ENCODE measurements at regions of chr11 and their contacts with region 1.

Region 1: GRCh38 chr11:47797633-47798032 is 30.5 kb upstream of the FNBP4 start:
- DNase-seq: no peak
- H3K4me3 ChIP-seq: no peak overlapping the region
- H3K27ac ChIP-seq: no peak overlapping the region
- H3K4me1 ChIP-seq: no peaks in the 10 kb centered on the region
- H3K27me3 ChIP-seq: no peaks in the 10 kb centered on the region
- CTCF ChIP-seq: no peak

Region 2: DNA sequence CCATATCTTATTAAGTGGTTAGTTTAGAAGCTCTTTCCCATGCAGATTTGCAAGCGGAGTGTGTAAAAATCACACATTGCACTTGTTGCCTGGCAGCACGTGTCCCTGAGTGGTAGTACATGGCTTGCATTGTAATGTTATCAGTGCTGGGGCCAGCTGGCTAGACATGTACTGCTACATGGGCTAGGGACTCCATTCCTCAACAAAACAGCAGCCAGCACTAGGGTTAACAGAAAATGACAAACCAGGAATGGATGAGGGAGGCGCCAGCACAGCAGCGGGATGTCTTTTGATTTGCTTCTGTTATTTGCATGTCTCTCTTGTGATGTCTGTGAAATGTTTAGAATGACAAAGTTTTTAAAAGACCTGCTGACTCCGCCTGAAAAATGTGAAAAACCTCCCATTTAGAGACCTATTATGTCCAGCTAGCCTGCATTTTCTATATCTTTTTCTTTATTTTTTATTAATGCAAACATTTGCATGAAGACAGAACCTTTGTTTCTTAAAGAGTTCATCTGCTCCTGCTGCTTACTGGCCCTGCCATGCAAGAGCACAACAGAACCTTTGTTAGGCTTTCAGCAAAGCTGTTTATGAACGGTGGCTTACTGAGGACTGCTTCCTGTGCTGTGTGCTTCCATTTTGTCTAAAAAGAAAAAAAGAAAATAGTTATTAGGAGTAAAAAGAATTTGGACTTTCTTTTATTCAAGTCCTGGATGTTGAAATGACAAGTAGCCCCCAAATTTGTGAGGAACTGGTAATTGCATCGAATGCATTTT is 820.4 kb before region 1 on chr11:
- CTCF ChIA-PET with region 1: no interaction called
- POLR2A ChIA-PET with region 1: no interaction called
- intact Hi-C with region 1: no loop called
- DNase-seq: no peak
- H3K4me3 ChIP-seq: no peak overlapping the region
- H3K27ac ChIP-seq: no peak overlapping the region
- H3K4me1 ChIP-seq: peaks cover 14% of the 10 kb centered on the region; the same call in 1 of the 2 replicates
- H3K27me3 ChIP-seq: no peaks in the 10 kb centered on the region
- CTCF ChIP-seq: no peak

Region 3: DNA sequence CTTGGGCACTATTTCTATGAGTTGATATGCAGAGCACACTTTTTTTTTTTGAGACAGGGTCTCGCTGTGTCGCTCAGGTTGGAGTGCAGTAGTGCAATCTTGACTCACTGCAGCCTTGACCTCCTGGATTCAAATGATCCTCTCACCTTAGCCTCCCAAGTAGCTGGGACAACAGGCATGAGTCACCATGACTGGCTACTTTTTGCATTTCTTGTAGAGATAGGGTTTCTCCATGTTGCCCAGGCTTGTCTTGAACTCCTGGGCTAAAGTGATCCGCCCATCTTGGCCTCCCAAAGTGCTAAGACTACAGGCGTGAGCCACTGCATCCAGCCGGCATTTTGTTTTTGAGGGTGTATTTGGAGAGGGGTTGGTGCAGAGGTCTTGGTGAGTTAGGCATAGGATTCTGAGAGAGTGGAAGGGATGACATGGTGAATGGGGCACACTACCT is 125.3 kb before region 1 on chr11:
- CTCF ChIA-PET with region 1: no interaction called
- POLR2A ChIA-PET with region 1: interaction called, 20 read pairs
- intact Hi-C with region 1: no loop called
- DNase-seq: peak in 1 of 2 experiments; percentile 49
- H3K4me3 ChIP-seq: no peak overlapping the region
- H3K27ac ChIP-seq: peak overlapping the region; percentile 0; the same call in 1 of the 2 replicates
- H3K4me1 ChIP-seq: peaks cover 21% of the 10 kb centered on the region
- H3K27me3 ChIP-seq: no peaks in the 10 kb centered on the region
- CTCF ChIP-seq: no peak

Region 4: GRCh38 chr11:47819743-47820142 is 22.1 kb after region 1 on chr11:
- CTCF ChIA-PET with region 1: interaction called, 3 read pairs
- POLR2A ChIA-PET with region 1: no interaction called
- intact Hi-C with region 1: loop called (anchors 2 kb)
- DNase-seq: no peak
- H3K4me3 ChIP-seq: no peak overlapping the region
- H3K27ac ChIP-seq: no peak overlapping the region
- H3K4me1 ChIP-seq: no peaks in the 10 kb centered on the region
- H3K27me3 ChIP-seq: no peaks in the 10 kb centered on the region
- CTCF ChIP-seq: no peak

Region 5: DNA sequence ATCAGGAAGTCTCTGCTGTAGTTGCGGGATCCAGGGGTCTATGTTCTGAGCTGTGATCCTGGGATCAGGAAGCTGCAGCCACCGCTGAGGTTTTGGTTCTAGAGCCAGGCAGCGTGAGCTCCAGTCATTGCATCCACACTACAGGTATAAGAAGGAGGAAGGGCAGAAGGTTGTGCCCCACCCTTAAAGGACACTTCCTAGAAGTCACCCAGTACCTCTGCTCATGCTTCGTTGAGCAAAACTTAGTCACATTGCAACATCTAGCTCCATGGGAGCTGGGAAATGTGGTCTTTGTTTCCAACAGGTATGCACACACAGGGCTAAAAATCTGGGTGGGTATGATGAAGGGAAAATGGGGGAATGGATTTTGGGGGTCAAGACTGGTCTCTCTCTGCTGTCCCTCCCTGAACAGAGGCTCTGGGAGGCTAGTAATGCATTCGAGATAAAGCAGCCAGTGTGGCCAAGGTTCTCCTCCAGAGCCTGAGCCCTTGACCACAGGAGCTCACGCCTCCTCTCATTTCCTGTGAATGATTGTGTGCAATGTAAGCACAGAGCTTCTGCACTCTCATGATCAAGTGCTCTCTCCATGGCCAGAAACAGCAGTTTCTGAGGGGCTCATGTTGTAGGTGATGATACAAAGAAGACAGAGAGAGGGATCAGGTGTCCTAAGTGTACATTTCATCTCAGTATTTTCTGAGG is 332.2 kb after region 1 on chr11:
- CTCF ChIA-PET with region 1: no interaction called
- POLR2A ChIA-PET with region 1: no interaction called
- intact Hi-C with region 1: loop called (anchors 10 kb)
- DNase-seq: peak in 1 of 2 experiments; percentile 56
- H3K4me3 ChIP-seq: no peak overlapping the region
- H3K27ac ChIP-seq: no peak overlapping the region
- H3K4me1 ChIP-seq: no peaks in the 10 kb centered on the region
- H3K27me3 ChIP-seq: no peaks in the 10 kb centered on the region
- CTCF ChIP-seq: no peak

Measured in PC-9 (cell line).